ENCODE measurements at regions of chr7 and their contacts with region 1.

Region 1: GRCh38 chr7:65872776-65873581 is at the start of gene VKORC1L1:
- DNase-seq: peak; percentile 84 to 97
- H3K4me3 ChIP-seq: peak within 1 kb of the TSS; percentile 95 to 100
- H3K27ac ChIP-seq: peak within 1 kb of the TSS; percentile 82 to 89
- H3K4me1 ChIP-seq: peaks cover 0 to 6% of the 10 kb centered on the region in 2 donors
- H3K27me3 ChIP-seq: no peaks in the 10 kb centered on the region
- CTCF ChIP-seq: no peak
- total RNA-seq, gene VKORC1L1: 10.2 TPM

Region 2: DNA sequence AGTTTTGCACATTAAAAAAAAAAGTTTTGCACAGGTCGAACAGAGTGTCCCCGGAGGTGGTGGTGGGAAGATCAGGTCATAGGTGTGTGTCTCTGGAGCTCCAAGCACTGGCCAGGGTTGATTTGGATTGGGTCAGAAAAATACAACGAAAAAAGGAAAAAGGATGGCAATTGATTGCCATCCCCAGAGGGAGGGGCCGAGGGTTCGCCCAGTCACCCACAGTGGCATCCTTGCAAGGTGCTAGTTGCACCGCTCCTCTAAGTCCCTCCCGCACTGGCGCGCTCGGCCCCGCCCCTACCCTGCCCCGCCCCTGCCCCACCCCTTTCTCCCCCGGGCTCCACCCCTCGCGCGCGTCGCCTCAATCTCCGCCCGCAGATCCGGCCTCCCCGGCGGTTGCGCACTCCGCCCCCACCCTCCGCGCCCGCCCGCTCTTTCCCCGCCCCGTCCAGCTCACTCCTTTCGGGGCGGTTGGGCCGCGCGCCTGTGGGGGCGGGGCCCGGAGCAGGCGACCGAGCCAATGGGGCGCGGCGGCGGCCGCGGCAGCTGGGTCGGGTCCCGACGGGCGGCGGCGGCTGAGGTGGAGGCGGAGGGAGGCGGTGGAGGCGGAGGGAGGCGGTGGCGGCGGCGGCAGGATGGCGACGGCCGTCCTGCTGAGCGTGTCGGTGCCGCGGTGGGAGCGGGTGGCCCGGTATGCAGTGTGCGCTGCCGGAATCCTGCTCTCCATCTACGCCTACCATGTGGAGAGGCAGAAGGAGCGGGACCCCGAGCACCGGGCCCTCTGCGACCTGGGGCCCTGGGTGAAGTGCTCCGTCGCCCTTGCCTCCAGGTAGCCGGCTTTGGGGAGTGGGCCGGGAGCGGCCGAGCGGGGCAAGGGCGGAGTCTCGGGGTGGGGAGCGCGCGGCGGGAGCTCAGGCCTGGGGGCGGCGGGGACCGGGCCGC is 835.0 kb before region 1 on chr7:
- intact Hi-C with region 1: loop called (anchors 5 kb)
- DNase-seq: peak; percentile 74 to 96
- H3K4me3 ChIP-seq: peak overlapping the region; percentile 86 to 98
- H3K27ac ChIP-seq: peak overlapping the region; percentile 86 to 87
- H3K4me1 ChIP-seq: peaks cover 0 to 5% of the 10 kb centered on the region in 2 donors
- H3K27me3 ChIP-seq: no peaks in the 10 kb centered on the region
- CTCF ChIP-seq: peak in 1 of 3 experiments; percentile 7

Region 3: DNA sequence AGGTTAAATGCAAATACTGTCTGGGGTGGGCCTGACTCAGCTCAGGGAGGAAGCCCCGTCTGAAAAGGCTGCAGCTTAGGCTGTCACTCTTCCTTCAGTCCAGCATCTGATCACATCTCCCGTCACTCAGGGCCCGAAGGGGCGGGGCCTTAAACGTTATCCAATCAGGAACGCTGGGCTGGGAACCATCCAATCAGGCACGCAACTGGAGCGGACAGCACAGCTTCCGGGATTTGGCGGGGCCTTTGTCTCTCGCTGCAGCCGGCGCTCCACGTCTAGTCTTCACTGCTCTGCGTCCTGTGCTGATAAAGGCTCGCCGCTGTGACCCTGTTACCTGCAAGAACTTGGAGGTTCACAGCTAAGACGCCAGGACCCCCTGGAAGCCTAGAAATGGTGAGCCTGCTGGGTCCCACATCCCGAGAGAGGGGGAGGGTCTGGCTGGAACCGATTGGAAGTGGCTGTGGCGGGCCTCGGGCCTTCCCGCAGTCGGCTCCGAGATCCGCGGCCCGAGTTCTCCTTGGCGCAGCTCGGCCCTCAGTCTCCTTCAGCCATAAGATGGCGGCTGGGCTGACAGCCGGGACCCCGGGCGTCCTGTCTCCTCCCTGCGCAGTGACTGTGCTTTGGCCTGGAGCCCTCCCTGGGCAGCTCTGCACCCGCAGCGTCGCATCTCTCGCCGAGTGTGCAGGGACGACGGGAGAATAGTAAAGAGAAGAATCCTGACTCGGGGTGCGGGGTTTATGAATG is 499.2 kb before region 1 on chr7 and contains the start of gene ZNF92:
- intact Hi-C with region 1: loop called (anchors 5 kb)
- DNase-seq: peak; percentile 93 to 98
- H3K4me3 ChIP-seq: peak within 1 kb of the TSS; percentile 70 to 94
- H3K27ac ChIP-seq: peak within 1 kb of the TSS; percentile 86 to 91
- H3K4me1 ChIP-seq: peaks cover 0 to 14% of the 10 kb centered on the region in 2 donors
- H3K27me3 ChIP-seq: no peaks in the 10 kb centered on the region
- CTCF ChIP-seq: no peak
- total RNA-seq, gene ZNF92: 4.0 TPM

Region 4: GRCh38 chr7:65750511-65751344 is 122.3 kb before region 1 on chr7:
- intact Hi-C with region 1: loop called (anchors 2 kb)
- DNase-seq: peak; percentile 57 to 94
- H3K4me3 ChIP-seq: peak overlapping the region; percentile 87 to 98
- H3K27ac ChIP-seq: peak overlapping the region; percentile 87 to 93
- H3K4me1 ChIP-seq: peaks cover 0 to 11% of the 10 kb centered on the region in 2 donors
- H3K27me3 ChIP-seq: no peaks in the 10 kb centered on the region
- CTCF ChIP-seq: peak in 2 of 3 experiments; percentile 13 to 34

Region 5: GRCh38 chr7:65981965-65982792 is 109.2 kb after region 1 on chr7 and contains the start of gene GUSB:
- intact Hi-C with region 1: loop called (anchors 1 kb)
- DNase-seq: peak; percentile 56 to 94
- H3K4me3 ChIP-seq: peak within 1 kb of the TSS; percentile 79 to 91
- H3K27ac ChIP-seq: peak within 1 kb of the TSS; percentile 76 to 80
- H3K4me1 ChIP-seq: peaks cover 6 to 12% of the 10 kb centered on the region in 2 donors
- H3K27me3 ChIP-seq: no peaks in the 10 kb centered on the region
- CTCF ChIP-seq: no peak
- total RNA-seq, gene GUSB: 8.7 TPM

Region 6: GRCh38 chr7:66493235-66494181 is 620.5 kb after region 1 on chr7:
- intact Hi-C with region 1: loop called (anchors 2 kb)
- DNase-seq: peak; percentile 89 to 99
- H3K4me3 ChIP-seq: peak overlapping the region; percentile 61 to 76
- H3K27ac ChIP-seq: peak overlapping the region; percentile 89 to 94
- H3K4me1 ChIP-seq: peaks cover 0 to 6% of the 10 kb centered on the region in 2 donors
- H3K27me3 ChIP-seq: no peaks in the 10 kb centered on the region
- CTCF ChIP-seq: peak; percentile 29 to 54 (median 38)

Measured in ascending aorta (tissue), 2 donors.